ENCODE measurements at regions of chr4 and their contacts with region 1.

Region 1: GRCh38 chr4:128565565-128566186 is 243.8 kb upstream of the JADE1 start:
- DNase-seq: no peak

Region 2: DNA sequence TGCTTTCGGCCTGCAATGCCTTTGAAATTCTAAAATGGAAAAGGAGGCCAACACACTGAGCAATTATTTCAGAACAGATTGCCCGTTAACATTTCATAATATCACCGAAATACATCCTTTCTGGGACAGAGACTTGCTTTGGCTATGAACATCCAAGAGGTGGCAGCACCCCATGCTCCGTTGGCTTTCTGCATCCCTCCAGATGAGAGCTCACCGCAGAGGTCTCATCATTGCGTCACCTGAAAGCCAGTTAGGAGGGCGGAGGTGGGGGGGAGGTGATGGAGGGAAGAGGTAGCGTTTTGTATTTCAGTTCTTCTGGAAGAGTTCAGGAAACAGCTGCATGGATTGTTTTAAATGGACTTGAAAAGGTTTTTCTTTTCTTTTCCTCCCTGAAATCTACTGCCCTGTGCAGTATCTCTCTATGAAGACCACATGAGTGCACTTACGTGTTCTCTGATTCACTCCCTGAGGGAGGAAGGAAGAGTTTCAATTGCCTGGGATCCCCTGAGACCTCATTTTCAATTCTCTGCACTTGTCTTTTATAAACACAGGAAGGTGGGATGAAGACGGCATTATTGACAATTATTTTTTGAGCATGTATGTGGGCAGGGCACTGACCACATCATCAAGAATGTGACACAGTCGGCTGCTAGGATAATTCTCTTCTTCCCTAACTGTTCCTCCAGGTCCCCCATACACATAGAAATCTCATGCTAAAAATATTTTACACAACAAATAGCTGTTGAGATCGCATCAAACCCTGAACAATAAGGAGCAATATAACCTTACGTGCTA is 111.2 kb before region 1 on chr4:
- intact Hi-C with region 1: loop called (anchors 5 kb)
- DNase-seq: peak; percentile 82

Region 3: DNA sequence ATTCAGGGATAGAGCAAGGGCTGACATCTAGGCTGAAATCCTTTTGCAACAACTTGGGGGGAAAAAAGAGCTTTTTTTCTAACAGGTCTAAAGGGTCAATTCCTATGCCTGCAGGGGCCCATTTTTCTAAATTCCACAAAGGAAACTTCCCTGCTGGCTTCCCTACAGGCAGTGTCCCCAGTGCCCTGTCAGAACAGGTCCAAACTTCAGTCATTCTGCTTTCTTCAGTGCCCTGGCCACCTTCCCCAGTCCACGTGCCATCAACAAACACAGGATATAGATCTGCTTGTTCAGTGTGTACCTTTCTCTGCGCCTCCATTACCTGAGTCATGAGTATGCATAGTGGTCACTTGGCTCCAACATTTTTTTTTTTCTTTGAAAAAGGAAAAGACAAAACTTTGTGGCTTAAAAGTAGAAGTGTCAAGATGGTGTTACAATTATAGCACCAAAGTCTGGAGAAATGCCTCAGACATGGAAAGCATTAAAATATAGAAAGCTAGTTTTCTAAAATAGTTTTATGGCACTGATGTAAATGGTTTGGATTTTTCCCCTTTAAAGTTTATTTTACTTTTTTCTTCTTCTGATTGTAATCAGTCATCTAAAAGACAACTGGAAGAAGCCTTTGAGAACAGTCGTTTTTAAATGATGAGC is 159.9 kb after region 1 on chr4:
- intact Hi-C with region 1: no loop called
- DNase-seq: no peak

Measured in cardiac septum (tissue), 1 donor.